PC-3 (cell line): ENCODE measurements at regions of chr3 and their contacts with region 1.

Region 1: DNA sequence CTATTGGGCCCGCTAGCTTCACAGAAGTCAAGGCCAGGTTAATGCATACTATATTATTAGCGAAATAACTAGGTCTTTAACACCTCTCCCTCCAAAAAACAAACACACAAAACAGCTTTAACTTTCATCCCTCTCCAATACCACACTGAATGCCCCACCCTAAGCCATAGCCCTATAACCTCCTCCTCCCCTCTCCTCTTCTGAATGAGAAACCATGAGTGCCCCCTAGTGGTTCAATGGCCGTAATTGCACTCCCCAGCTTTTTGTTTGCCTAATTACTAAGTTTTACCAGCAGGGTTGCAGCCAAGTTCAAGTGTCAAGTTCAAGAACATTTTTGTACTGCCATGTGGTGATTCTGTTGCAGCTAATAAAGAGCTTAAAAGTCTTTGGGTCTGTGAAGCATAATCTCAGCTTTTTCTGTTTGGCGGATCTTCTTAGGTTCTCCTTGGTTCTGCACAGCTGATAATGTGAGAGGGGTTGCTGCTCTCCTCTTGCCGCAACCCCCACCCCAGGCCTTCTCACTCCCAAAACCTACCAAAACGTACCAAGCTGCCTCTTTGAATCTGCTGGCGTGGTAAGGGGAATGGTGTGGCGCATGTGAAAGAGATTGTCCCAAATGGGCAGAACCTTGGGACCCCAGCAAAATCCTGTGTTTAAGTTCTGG is 57.9 kb downstream of the RPL22L1 start:
- DNase-seq: peak; percentile 98
- ATAC-seq: peak; percentile 36
- H3K4me3 ChIP-seq: peak overlapping the region; percentile 8; the same call in 1 of the 2 replicates
- H3K27ac ChIP-seq: peak overlapping the region; percentile 80
- H3K4me1 ChIP-seq: peaks cover 56% of the 10 kb centered on the region
- H3K27me3 ChIP-seq: no peaks in the 10 kb centered on the region
- CTCF ChIP-seq: peak; percentile 98

Region 2: GRCh38 chr3:170307671-170308403 is 504.2 kb before region 1 on chr3:
- CTCF ChIA-PET with region 1: interaction called, 14 read pairs
- POLR2A ChIA-PET with region 1: no interaction called
- intact Hi-C with region 1: loop called (anchors 1 kb)
- DNase-seq: peak; percentile 92
- ATAC-seq: peak; percentile 80
- H3K4me3 ChIP-seq: no peak overlapping the region
- H3K27ac ChIP-seq: peak overlapping the region; percentile 10; the same call in 1 of the 2 replicates
- H3K4me1 ChIP-seq: peaks cover 12% of the 10 kb centered on the region
- H3K27me3 ChIP-seq: no peaks in the 10 kb centered on the region
- CTCF ChIP-seq: no peak

Region 3: GRCh38 chr3:170469151-170470062 is 342.7 kb before region 1 on chr3:
- CTCF ChIA-PET with region 1: interaction called, 4 read pairs
- POLR2A ChIA-PET with region 1: no interaction called
- intact Hi-C with region 1: loop called (anchors 2 kb)
- DNase-seq: peak; percentile 68
- ATAC-seq: peak; percentile 72
- H3K4me3 ChIP-seq: no peak overlapping the region; the same call in 1 of the 2 replicates
- H3K27ac ChIP-seq: peak overlapping the region; percentile 21
- H3K4me1 ChIP-seq: peaks cover 56% of the 10 kb centered on the region
- H3K27me3 ChIP-seq: no peaks in the 10 kb centered on the region
- CTCF ChIP-seq: no peak

Region 4: GRCh38 chr3:170553788-170554757 is 258.0 kb before region 1 on chr3:
- CTCF ChIA-PET with region 1: interaction called, 12 read pairs
- POLR2A ChIA-PET with region 1: no interaction called
- intact Hi-C with region 1: loop called (anchors 1 kb)
- DNase-seq: peak; percentile 37
- ATAC-seq: peak; percentile 55
- H3K4me3 ChIP-seq: no peak overlapping the region
- H3K27ac ChIP-seq: no peak overlapping the region
- H3K4me1 ChIP-seq: no peaks in the 10 kb centered on the region
- H3K27me3 ChIP-seq: no peaks in the 10 kb centered on the region
- CTCF ChIP-seq: peak; percentile 38

Region 5: GRCh38 chr3:170699158-170700053 is 112.7 kb before region 1 on chr3:
- CTCF ChIA-PET with region 1: interaction called, 4 read pairs
- POLR2A ChIA-PET with region 1: no interaction called
- intact Hi-C with region 1: loop called (anchors 5 kb)
- DNase-seq: no peak
- ATAC-seq: no peak
- H3K4me3 ChIP-seq: no peak overlapping the region
- H3K27ac ChIP-seq: no peak overlapping the region
- H3K4me1 ChIP-seq: peaks cover 26% of the 10 kb centered on the region
- H3K27me3 ChIP-seq: no peaks in the 10 kb centered on the region
- CTCF ChIP-seq: no peak

Region 6: DNA sequence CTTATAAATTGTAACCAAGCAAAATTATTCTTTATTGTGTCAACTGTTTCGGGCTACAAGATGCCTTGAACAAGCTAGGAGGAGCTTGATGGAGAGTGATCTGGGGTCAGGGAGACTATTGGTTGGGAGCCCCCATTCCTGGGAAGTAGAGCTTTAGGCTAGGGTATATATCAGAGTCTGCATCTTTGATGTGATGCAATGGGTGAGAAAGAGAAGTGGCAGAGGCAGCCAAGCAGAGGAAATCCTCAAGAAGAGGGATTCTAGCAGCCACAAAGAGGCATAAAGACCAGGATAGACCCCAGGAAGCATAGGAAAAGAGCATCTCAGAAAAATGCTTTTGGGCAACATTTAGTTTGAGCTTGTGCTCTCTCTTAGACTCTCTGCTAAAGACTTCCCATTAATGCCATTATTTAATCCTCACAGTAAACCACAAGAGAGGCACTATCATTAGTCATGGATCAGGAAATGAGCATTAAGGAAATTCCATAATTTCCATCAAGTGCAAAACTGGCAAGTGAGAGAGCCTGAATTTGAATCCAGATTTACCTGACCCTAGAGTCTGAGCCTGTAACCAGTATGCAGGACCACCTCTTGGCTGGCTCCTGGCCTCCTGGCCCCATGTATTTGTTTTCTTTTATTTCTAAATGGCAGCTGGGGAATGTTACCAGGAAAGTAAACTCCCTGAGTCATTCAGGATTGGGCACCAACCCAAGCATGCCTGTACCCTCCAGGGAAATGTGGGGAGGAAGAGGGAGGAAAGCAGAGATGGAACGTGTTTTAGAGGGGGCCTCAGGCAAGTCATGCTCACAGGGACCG is 60.8 kb before region 1 on chr3:
- CTCF ChIA-PET with region 1: interaction called, 8 read pairs
- POLR2A ChIA-PET with region 1: no interaction called
- intact Hi-C with region 1: loop called (anchors 1 kb)
- DNase-seq: peak; percentile 97
- ATAC-seq: peak; percentile 73
- H3K4me3 ChIP-seq: no peak overlapping the region
- H3K27ac ChIP-seq: peak overlapping the region; percentile 87
- H3K4me1 ChIP-seq: peaks cover 50% of the 10 kb centered on the region
- H3K27me3 ChIP-seq: no peaks in the 10 kb centered on the region
- CTCF ChIP-seq: no peak